ENCODE measurements at regions of chr7 and their contacts with region 1.

Region 1: DNA sequence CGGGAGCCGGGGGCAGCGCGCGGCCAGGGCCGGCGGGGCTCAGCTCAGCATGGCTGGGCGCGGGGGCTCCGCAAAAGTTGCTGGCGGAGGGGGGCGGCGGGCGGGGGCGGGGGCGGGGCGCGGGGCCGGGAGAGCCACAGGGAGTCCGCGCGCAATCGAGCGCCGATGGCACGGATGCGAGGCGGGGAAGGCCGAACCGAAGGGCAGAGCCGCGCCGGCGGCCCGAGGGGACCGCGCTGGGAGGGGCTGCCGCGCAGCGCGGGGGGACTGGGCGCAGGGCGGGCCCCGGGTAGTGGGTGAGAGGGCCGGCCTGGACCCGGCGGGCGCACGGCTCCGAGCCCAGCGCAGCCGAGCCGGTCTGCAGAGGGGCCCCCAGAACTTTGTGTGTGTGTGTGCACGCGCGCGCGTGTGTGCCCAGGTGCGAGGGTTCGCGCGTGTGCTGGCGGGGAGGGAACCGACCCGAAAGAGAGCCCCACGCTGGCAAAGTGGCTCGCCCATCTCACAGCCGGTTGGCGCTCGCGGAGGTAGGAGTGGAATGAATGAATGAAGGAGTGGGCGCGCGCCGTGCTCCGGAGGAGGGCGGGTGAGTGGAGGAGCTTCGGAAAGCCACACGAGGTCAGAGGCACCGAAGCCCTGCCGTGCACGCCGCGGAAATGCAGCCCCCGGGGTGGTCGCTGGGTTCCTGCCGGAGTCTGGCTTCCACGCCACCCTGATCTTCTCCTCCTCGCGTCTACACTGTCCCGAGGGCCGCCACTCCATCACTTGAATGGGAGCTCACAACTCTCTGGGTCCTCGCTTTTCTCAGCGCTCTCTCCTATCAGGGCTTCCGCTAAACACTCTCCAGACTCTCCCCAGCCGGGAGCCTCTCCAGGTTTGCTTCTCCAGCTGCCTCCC is at the start of gene HIPK2:
- DNase-seq: peak; percentile 56
- ATAC-seq: peak; percentile 88
- H3K4me3 ChIP-seq: peak within 1 kb of the TSS; percentile 86 to 94 (median 86)
- H3K27ac ChIP-seq: peak within 1 kb of the TSS; percentile 92
- H3K4me1 ChIP-seq: peaks cover 67% of the 10 kb centered on the region
- H3K27me3 ChIP-seq: no peaks in the 10 kb centered on the region; a peak in 1 of 5 replicates
- CTCF ChIP-seq: no peak
- EP300 ChIP-seq: no peak
- POLR2A ChIP-seq: peak; percentile 30 to 51; a peak in 2 of 4 replicates
- RAD21 ChIP-seq: 0 out of 2 replicates have a peak, but pooled peaks have one; percentile 11
- total RNA-seq, gene HIPK2: 14.4 and 25.9 TPM in 2 replicates

Region 2: GRCh38 chr7:139505563-139505962 is 272.6 kb before region 1 on chr7:
- CTCF ChIA-PET with region 1: no interaction called
- POLR2A ChIA-PET with region 1: no interaction called
- in situ Hi-C with region 1: no loop called
- intact Hi-C with region 1: no loop called
- DNase-seq: peak; percentile 10
- ATAC-seq: peak; percentile 77
- H3K4me3 ChIP-seq: no peak overlapping the region
- H3K27ac ChIP-seq: no peak overlapping the region
- H3K4me1 ChIP-seq: peaks cover 4% of the 10 kb centered on the region; the same call in 1 of the 2 replicates
- H3K27me3 ChIP-seq: peaks cover 0 to 19% of the 10 kb centered on the region in 2 experiments; a peak in 3 of 5 replicates
- CTCF ChIP-seq: peak; percentile 64
- EP300 ChIP-seq: no peak
- POLR2A ChIP-seq: no peak
- RAD21 ChIP-seq: no peak

Region 3: GRCh38 chr7:139645572-139646523 is 132.3 kb before region 1 on chr7:
- CTCF ChIA-PET with region 1: interaction called, 3 read pairs
- POLR2A ChIA-PET with region 1: interaction called, 3 read pairs
- in situ Hi-C with region 1: loop called (anchors 10 kb)
- intact Hi-C with region 1: loop called (anchors 1 kb)
- DNase-seq: peak; percentile 84
- ATAC-seq: peak; percentile 83
- H3K4me3 ChIP-seq: no peak overlapping the region
- H3K27ac ChIP-seq: no peak overlapping the region
- H3K4me1 ChIP-seq: peaks cover 65% of the 10 kb centered on the region
- H3K27me3 ChIP-seq: no peaks in the 10 kb centered on the region
- CTCF ChIP-seq: peak; percentile 95
- EP300 ChIP-seq: no peak
- POLR2A ChIP-seq: no peak
- RAD21 ChIP-seq: peak; percentile 90

Region 4: GRCh38 chr7:139711991-139712753 is 66.0 kb before region 1 on chr7:
- CTCF ChIA-PET with region 1: no interaction called
- POLR2A ChIA-PET with region 1: no interaction called
- in situ Hi-C with region 1: no loop called
- intact Hi-C with region 1: loop called (anchors 2 kb)
- DNase-seq: no peak
- ATAC-seq: peak; percentile 44
- H3K4me3 ChIP-seq: no peak overlapping the region
- H3K27ac ChIP-seq: peak overlapping the region; percentile 17
- H3K4me1 ChIP-seq: peaks cover 35% of the 10 kb centered on the region
- H3K27me3 ChIP-seq: no peaks in the 10 kb centered on the region
- CTCF ChIP-seq: no peak
- EP300 ChIP-seq: no peak
- POLR2A ChIP-seq: no peak
- RAD21 ChIP-seq: no peak

Region 5: DNA sequence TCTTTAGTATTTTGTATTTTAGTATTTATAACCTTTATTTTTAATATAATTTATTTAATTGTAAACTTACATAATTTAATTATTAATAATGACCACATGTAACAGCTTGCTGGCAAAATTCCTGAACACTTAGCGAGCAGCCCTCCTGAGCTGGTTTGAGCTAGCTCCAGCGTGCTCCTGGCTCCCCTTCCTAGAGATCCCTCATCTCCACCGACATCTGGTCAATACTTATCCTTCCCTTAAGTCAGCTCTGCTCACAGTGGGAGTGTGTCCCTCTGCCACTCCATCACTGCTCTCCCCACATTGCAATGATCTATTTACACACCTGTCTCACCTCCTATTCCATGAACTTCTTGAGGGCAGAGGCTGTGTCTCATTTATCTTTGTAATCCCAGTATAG is 30.2 kb after region 1 on chr7:
- CTCF ChIA-PET with region 1: no interaction called
- POLR2A ChIA-PET with region 1: no interaction called
- in situ Hi-C with region 1: no loop called
- intact Hi-C with region 1: no loop called
- DNase-seq: no peak
- ATAC-seq: no peak
- H3K4me3 ChIP-seq: no peak overlapping the region
- H3K27ac ChIP-seq: no peak overlapping the region
- H3K4me1 ChIP-seq: peaks cover 15% of the 10 kb centered on the region
- H3K27me3 ChIP-seq: no peaks in the 10 kb centered on the region
- CTCF ChIP-seq: no peak
- EP300 ChIP-seq: no peak
- POLR2A ChIP-seq: no peak
- RAD21 ChIP-seq: no peak

Region 6: DNA sequence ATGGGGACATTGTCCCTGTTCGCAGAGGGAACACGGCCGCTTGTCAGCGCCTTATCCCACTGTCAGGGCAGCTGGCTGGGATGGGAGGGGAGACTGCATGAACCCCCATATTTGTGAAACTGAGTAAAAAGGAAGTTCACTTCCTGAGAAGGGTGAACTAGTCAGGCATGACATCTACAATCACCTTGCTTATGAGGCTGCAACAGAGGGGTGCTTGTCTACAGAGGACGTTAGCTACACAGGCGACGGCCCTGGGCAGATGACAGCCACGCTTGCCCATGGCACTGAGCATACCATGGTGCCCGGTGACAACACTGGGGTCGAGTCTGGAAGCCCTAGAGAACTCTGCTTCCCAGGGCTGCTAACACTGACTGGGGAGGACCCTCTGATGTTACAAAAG is 444.6 kb after region 1 on chr7:
- CTCF ChIA-PET with region 1: no interaction called
- POLR2A ChIA-PET with region 1: no interaction called
- in situ Hi-C with region 1: no loop called
- intact Hi-C with region 1: no loop called
- DNase-seq: no peak
- ATAC-seq: no peak
- H3K4me3 ChIP-seq: no peak overlapping the region
- H3K27ac ChIP-seq: no peak overlapping the region
- H3K4me1 ChIP-seq: peaks cover 68% of the 10 kb centered on the region
- H3K27me3 ChIP-seq: no peaks in the 10 kb centered on the region
- CTCF ChIP-seq: no peak
- EP300 ChIP-seq: no peak
- POLR2A ChIP-seq: no peak
- RAD21 ChIP-seq: no peak

Region 7: GRCh38 chr7:140326116-140326928 is 548.1 kb after region 1 on chr7:
- CTCF ChIA-PET with region 1: no interaction called
- POLR2A ChIA-PET with region 1: no interaction called
- in situ Hi-C with region 1: no loop called
- intact Hi-C with region 1: no loop called
- DNase-seq: peak; percentile 63
- ATAC-seq: peak; percentile 93
- H3K4me3 ChIP-seq: peak overlapping the region; percentile 33 to 58 (median 49)
- H3K27ac ChIP-seq: no peak overlapping the region
- H3K4me1 ChIP-seq: peaks cover 27% of the 10 kb centered on the region
- H3K27me3 ChIP-seq: no peaks in the 10 kb centered on the region
- CTCF ChIP-seq: peak; percentile 93
- EP300 ChIP-seq: no peak
- POLR2A ChIP-seq: no peak
- RAD21 ChIP-seq: peak; percentile 91

Measured in HepG2 (cell line).